Ascending aorta (tissue), 2 donors: ENCODE measurements at regions of chr21 and their contacts with region 1.

Region 1: DNA sequence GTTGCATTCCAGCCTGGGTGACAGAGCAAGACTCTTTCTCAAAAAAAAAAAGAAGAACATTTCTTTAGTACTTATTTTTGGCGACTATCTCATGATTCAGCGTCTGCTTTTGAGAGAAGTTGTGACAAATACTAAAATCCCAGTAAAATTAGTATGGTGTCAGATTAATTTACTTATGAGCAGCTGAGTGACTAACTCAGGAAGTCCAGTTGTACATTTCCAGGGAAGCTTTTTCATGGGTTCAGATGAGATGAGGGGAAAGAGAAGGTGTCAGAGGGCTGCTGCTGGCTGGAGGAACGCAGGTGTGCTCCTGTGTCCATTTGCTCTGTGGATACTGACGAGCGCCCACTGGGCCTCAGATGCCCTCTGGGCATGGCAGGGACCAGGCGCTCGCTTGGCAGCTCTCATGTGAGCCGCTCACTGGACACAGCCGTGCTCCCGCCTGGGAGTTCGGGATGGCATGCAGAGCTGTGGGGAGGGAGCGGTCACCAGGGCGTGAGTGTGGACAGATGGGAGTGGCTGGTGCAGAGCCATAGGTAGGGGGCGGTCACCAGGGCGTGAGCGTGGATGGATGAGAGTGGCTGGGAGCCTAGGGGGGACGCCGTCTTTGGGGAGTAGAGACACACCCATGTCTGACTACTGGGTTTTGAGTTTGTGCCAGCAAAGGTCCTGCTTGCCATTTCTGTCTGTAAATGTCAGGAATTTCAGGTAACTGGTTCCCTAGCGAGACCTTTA is 55.0 kb downstream of the ADARB1 start:
- DNase-seq: peak in 1 of 2 donors; percentile 78
- H3K4me3 ChIP-seq: peak overlapping the region in 1 of 2 donors; percentile 49
- H3K27ac ChIP-seq: peak overlapping the region; percentile 90 to 94
- H3K4me1 ChIP-seq: peaks cover 30 to 53% of the 10 kb centered on the region in 2 donors
- H3K27me3 ChIP-seq: no peaks in the 10 kb centered on the region
- CTCF ChIP-seq: no peak

Region 2: GRCh38 chr21:44949779-44950198 is 179.6 kb before region 1 on chr21:
- intact Hi-C with region 1: loop called (anchors 1 kb)
- DNase-seq: peak; percentile 50 to 94
- H3K4me3 ChIP-seq: peak overlapping the region in 1 of 2 donors; percentile 10
- H3K27ac ChIP-seq: peak overlapping the region; percentile 82 to 96
- H3K4me1 ChIP-seq: peaks cover 23 to 40% of the 10 kb centered on the region in 2 donors
- H3K27me3 ChIP-seq: no peaks in the 10 kb centered on the region
- CTCF ChIP-seq: peak; percentile 96 to 98 (median 97)

Region 3: DNA sequence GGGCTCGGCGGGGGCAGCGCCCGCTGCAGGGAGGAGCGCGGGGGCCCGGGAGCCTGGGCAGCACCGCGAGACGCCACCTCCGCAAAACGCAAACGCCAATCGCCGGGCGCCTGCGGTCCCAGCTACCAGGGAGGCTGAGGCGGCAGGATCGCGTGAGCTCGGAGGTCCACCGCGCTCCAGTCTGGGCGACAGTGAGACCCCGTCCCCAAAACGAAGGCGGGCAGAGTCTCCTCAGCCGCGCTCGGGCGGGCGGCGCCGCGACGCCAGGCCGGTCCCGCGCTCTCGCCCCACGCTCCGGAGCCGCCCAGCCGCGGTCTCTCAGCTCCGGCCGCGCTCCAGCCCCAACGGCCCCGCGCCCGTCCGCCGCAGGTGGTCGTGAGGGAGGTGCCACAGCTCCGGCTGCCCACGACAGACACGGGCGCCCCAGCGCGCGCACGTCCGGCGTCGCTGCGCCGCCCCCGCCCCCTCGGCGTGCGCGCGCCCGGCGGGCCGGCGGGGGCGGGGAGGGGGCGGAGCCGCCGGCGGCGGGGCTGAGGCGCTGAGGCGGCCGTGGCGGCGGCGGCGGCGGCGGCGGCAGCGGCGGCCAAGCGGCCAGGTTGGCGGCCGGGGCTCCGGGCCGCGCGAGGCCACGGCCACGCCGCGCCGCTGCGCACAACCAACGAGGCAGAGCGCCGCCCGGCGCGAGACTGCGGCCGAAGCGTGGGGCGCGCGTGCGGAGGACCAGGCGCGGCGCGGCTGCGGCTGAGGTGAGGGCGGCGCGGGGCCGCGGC is 55.1 kb before region 1 on chr21 and contains the start of gene ADARB1:
- intact Hi-C with region 1: loop called (anchors 5 kb)
- DNase-seq: peak in 1 of 2 donors; percentile 74
- H3K4me3 ChIP-seq: peak within 1 kb of the TSS; percentile 81 to 98
- H3K27ac ChIP-seq: peak within 1 kb of the TSS; percentile 91
- H3K4me1 ChIP-seq: peaks cover 1 to 21% of the 10 kb centered on the region in 2 donors
- H3K27me3 ChIP-seq: no peaks in the 10 kb centered on the region
- CTCF ChIP-seq: no peak
- total RNA-seq, gene ADARB1: 82.9 TPM

Region 4: GRCh38 chr21:45091550-45092322 is 37.6 kb before region 1 on chr21:
- intact Hi-C with region 1: loop called (anchors 5 kb)
- DNase-seq: no peak
- H3K4me3 ChIP-seq: no peak overlapping the region
- H3K27ac ChIP-seq: peak overlapping the region in 1 of 2 donors; percentile 27
- H3K4me1 ChIP-seq: peaks cover 10 to 42% of the 10 kb centered on the region in 2 donors
- H3K27me3 ChIP-seq: no peaks in the 10 kb centered on the region
- CTCF ChIP-seq: no peak

Region 5: GRCh38 chr21:45104560-45104959 is 24.8 kb before region 1 on chr21:
- intact Hi-C with region 1: loop called (anchors 2 kb)
- DNase-seq: no peak
- H3K4me3 ChIP-seq: no peak overlapping the region
- H3K27ac ChIP-seq: peak overlapping the region; percentile 13 to 65
- H3K4me1 ChIP-seq: peaks cover 10 to 60% of the 10 kb centered on the region in 2 donors
- H3K27me3 ChIP-seq: no peaks in the 10 kb centered on the region
- CTCF ChIP-seq: no peak

Region 6: DNA sequence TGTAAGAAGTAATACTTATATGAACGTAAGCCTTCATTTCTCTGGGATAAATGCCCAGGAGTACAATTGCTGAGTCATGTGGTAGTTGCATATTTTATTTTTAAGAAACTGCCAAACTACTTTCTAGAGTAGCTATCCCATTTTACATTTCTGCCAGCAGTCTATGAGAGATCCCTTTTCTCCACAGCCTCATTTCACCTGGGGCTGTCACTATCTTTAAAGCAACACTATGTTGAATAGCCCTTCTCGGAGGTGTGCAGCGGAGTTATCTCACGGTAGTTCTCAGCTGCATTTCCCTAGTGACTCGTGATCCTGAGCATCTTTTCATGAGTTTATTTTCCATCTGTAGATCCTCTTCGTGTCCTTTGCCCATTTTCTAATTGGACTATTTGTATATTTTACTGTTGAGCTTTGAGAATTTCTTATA is 38.5 kb after region 1 on chr21:
- intact Hi-C with region 1: no loop called
- DNase-seq: no peak
- H3K4me3 ChIP-seq: no peak overlapping the region
- H3K27ac ChIP-seq: peak overlapping the region; percentile 42 to 44
- H3K4me1 ChIP-seq: peaks cover 5 to 38% of the 10 kb centered on the region in 2 donors
- H3K27me3 ChIP-seq: no peaks in the 10 kb centered on the region
- CTCF ChIP-seq: no peak